HEK293 (cell line): ENCODE measurements at regions of chr1 and their contacts with region 1.

Region 1: DNA sequence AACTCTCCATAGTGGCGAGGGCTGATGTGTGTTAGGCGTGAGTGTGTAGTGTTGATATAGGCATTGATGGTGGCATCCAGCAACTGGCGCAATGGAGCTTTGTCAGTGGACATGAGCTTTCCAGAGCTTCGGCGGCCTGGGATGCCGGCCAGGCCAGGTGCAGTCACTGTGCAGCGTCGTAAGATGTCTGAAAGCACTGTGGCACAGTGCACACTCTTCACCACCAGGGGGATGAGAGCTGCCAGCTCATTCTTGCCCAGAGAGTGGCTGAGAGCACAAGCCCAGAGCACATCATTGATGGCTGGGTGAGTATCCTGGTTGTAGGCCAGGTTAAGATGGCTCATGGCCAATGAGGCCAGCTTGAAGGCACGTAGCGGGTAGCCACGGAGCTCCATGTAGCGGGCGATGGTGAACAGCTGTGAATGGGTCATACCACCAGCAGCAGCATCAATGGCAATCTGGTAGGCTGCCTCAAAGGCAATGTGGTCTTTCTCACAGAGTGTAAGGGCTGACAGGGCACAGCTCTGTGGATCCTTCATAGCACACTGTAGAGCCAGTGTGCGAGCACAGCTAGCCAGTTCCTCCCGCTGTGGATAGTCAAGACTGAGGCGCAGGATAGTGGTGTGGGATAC is 6.7 kb downstream of the UROD start:
- H3K4me3 ChIP-seq: no peak overlapping the region
- H3K27ac ChIP-seq: no peak overlapping the region
- H3K4me1 ChIP-seq: no peaks in the 10 kb centered on the region
- CTCF ChIP-seq: peak; percentile 76

Region 2: GRCh38 chr1:44249543-44249942 is 769.2 kb before region 1 on chr1:
- CTCF ChIA-PET with region 1: no interaction called
- POLR2A ChIA-PET with region 1: no interaction called
- H3K4me3 ChIP-seq: no peak overlapping the region
- H3K27ac ChIP-seq: no peak overlapping the region
- H3K4me1 ChIP-seq: no peaks in the 10 kb centered on the region
- CTCF ChIP-seq: no peak

Region 3: GRCh38 chr1:44826375-44827196 is 192.1 kb before region 1 on chr1:
- CTCF ChIA-PET with region 1: no interaction called
- POLR2A ChIA-PET with region 1: no interaction called
- H3K4me3 ChIP-seq: no peak overlapping the region
- H3K27ac ChIP-seq: no peak overlapping the region
- H3K4me1 ChIP-seq: peaks cover 8% of the 10 kb centered on the region
- CTCF ChIP-seq: no peak

Region 4: GRCh38 chr1:45033356-45033755 is 14.6 kb after region 1 on chr1:
- CTCF ChIA-PET with region 1: interaction called, 12 read pairs
- POLR2A ChIA-PET with region 1: no interaction called
- H3K4me3 ChIP-seq: no peak overlapping the region
- H3K27ac ChIP-seq: no peak overlapping the region
- H3K4me1 ChIP-seq: peaks cover 2% of the 10 kb centered on the region; the same call in 1 of the 2 replicates
- CTCF ChIP-seq: no peak

Region 5: DNA sequence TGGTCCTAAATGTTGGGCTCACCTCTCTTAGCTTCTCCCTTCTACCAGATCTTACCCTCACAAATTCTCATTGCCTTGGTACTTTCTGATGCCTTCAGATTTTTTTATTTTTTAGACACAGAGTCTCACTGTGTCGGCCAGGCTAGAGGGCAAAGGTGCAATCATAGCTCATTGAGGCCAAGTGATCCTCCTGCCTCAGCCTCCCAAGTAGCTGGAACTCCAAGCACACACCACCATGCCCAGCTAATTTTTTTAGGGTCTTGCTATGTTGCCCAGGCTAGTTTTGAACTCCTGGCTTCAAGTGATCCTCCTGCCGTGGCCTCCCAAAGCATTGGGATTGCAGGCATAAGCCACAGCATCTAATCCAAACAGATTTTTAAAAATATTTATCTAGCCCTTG is 118.3 kb after region 1 on chr1:
- CTCF ChIA-PET with region 1: no interaction called
- POLR2A ChIA-PET with region 1: no interaction called
- H3K4me3 ChIP-seq: no peak overlapping the region
- H3K27ac ChIP-seq: no peak overlapping the region
- H3K4me1 ChIP-seq: peaks cover 3% of the 10 kb centered on the region; the same call in 1 of the 2 replicates
- CTCF ChIP-seq: no peak

Region 6: DNA sequence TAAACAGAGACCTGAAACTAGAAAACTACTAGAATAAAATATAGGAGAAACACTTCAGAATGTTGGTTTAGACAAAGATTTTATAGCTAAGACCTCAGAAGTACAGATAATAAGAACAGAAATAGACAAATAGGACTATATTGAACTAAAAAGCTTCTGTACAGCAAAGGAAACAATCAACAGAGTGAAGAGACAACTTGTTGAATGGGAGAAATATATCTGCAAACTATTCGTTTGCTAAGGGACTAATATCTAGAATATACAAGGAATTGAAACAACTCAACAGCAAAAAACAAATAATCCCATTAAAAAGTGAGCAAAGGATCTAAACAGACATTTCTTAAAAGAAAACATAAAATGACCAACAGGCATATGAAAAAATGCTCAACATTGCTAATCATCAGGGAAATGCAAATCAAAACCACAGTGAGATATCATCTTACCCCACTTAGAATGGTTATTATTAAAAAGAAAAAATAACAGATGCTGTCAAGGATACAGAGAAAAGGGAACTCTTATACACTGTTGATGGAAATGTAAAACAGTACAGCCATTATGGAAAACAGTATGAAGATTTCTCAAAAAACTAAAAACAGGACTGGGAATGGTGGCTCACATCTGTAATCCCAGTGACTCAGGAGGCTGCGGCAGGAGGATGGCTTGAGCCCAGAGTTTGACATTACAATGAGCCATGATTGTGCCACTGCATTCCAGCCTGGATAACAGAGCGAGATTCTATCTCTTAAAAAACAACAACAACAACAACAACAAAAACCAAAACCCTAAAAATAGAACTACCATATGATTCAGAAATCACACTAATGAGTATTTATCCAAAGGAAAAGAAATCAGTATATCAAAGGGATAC is 225.0 kb after region 1 on chr1:
- CTCF ChIA-PET with region 1: no interaction called
- POLR2A ChIA-PET with region 1: no interaction called
- H3K4me3 ChIP-seq: no peak overlapping the region
- H3K27ac ChIP-seq: no peak overlapping the region
- H3K4me1 ChIP-seq: no peaks in the 10 kb centered on the region
- CTCF ChIP-seq: no peak